Mammary epithelial cell (primary cell): ENCODE measurements at regions of chr1 and their contacts with region 1.

Region 1: DNA sequence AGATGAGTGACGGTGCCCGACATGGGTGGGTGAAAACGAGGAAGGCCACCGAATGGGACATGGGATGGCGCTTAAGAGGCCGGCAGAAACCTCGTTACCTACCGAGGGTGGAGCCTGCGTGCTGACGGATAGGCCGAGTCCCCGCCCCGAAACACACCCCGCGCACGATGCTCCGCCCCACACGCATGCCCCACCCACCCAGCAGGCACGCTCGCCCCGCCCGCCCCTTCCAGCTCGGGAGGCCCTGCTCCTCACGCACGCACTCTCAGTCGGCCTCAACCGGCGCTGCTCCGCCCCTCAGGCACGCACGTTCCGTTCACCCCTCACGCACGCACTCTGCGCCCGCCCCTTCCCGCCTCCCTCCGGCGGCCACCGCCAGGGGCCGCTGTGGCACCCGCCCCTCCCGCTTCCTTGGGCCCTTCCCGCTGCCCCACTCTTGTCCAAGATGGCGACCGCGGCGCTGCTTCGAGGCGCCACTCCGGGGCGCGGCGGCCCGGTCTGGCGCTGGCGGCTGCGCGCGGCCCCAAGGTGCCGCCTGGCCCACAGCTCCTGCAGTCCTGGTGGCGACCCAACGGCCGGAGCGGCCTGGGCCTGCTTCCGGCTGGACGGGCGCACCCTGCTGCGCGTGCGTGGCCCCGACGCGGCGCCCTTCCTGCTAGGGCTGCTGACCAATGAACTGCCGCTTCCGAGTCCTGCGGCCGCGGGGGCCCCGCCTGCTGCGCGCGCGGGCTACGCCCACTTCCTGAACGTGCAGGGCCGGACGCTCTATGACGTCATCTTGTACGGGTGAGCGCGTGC is at the start of gene IBA57:
- DNase-seq: peak; percentile 98
- H3K4me3 ChIP-seq: peak within 1 kb of the TSS; percentile 59 to 73 (median 68)
- H3K27ac ChIP-seq: peak within 1 kb of the TSS; percentile 94
- H3K4me1 ChIP-seq: peaks cover 38% of the 10 kb centered on the region
- H3K27me3 ChIP-seq: no peaks in the 10 kb centered on the region
- CTCF ChIP-seq: peak; percentile 72 to 87
- total RNA-seq, gene IBA57: 7.0 to 8.0 TPM

Region 2: GRCh38 chr1:227880342-227880924 is 285.1 kb before region 1 on chr1:
- CTCF ChIA-PET with region 1: interaction called, 12 read pairs
- dilution Hi-C with region 1: no loop called
- in situ Hi-C with region 1: no loop called
- intact Hi-C with region 1: no loop called
- DNase-seq: no peak
- H3K4me3 ChIP-seq: no peak overlapping the region
- H3K27ac ChIP-seq: no peak overlapping the region
- H3K4me1 ChIP-seq: peaks cover 9% of the 10 kb centered on the region
- H3K27me3 ChIP-seq: no peaks in the 10 kb centered on the region
- CTCF ChIP-seq: no peak

Region 3: GRCh38 chr1:228109073-228109961 is 56.3 kb before region 1 on chr1 and contains the start of gene MRPL55:
- CTCF ChIA-PET with region 1: no interaction called
- dilution Hi-C with region 1: loop called (anchors 5 kb)
- in situ Hi-C with region 1: no loop called
- intact Hi-C with region 1: no loop called
- DNase-seq: peak; percentile 95
- H3K4me3 ChIP-seq: peak within 1 kb of the TSS; percentile 73 to 99 (median 80)
- H3K27ac ChIP-seq: peak within 1 kb of the TSS; percentile 66
- H3K4me1 ChIP-seq: peaks cover 14% of the 10 kb centered on the region
- H3K27me3 ChIP-seq: no peaks in the 10 kb centered on the region
- CTCF ChIP-seq: peak in 1 of 2 donors; percentile 10
- total RNA-seq, gene MRPL55: 37.7 to 42.3 TPM

Region 4: GRCh38 chr1:228405987-228406265 is 240.4 kb after region 1 on chr1:
- CTCF ChIA-PET with region 1: interaction called, 16 read pairs
- dilution Hi-C with region 1: no loop called
- in situ Hi-C with region 1: no loop called
- intact Hi-C with region 1: no loop called
- DNase-seq: no peak
- H3K4me3 ChIP-seq: peak overlapping the region; percentile 69 to 94 (median 76)
- H3K27ac ChIP-seq: peak overlapping the region; percentile 16
- H3K4me1 ChIP-seq: peaks cover 28% of the 10 kb centered on the region
- H3K27me3 ChIP-seq: no peaks in the 10 kb centered on the region
- CTCF ChIP-seq: no peak